ENCODE measurements at regions of chr22 and their contacts with region 1.

Region 1: DNA sequence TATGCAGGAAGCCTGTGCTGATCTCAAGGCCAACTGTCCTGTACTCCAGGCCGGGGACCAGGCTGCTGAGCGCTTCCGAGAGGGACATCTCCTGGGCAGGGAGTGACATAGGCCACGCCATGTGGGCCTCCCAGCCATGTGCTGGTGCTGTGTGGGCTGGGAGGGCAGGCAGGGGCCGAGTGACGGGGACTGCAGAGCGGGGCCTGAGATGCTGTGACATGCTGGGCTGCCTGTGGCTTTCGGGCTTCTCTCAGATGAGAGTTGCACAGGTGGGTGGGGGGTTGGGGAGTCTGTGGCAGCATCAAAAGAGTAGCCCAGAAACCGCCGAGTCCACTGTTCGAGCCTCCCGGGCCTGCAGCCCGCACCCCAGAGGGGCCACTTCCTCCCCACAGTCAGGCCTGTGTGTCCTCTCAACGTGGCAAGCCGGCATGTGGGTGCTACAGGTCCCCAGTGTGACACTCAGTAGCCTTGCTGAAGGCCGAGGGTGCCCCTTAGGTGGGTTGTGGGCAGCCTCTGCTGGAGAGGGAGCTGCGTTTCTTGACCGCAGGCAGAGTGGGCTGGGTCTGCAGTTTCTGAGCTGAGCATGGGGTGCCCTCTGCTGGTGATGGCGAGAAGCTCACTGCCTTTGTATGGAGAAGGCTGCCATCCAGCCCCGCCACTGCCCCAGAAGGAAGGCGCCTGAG is 101.2 kb downstream of the BCR start:
- DNase-seq: peak; percentile 51
- ATAC-seq: peak; percentile 89
- H3K4me3 ChIP-seq: no peak overlapping the region
- H3K27ac ChIP-seq: no peak overlapping the region
- H3K4me1 ChIP-seq: no peaks in the 10 kb centered on the region
- H3K27me3 ChIP-seq: no peaks in the 10 kb centered on the region
- CTCF ChIP-seq: peak; percentile 89

Region 2: GRCh38 chr22:23178512-23179254 is 102.9 kb before region 1 on chr22:
- CTCF ChIA-PET with region 1: interaction called, 27 read pairs
- POLR2A ChIA-PET with region 1: no interaction called
- in situ Hi-C with region 1: no loop called
- intact Hi-C with region 1: loop called (anchors 2 kb)
- DNase-seq: peak; percentile 28
- ATAC-seq: peak; percentile 58; the same call in 1 of the 2 replicates
- H3K4me3 ChIP-seq: no peak overlapping the region
- H3K27ac ChIP-seq: no peak overlapping the region
- H3K4me1 ChIP-seq: peaks cover 8% of the 10 kb centered on the region
- H3K27me3 ChIP-seq: no peaks in the 10 kb centered on the region
- CTCF ChIP-seq: peak; percentile 93

Measured in Panc1 (cell line).